ENCODE measurements at regions of chr9 and their contacts with region 1.

Region 1: DNA sequence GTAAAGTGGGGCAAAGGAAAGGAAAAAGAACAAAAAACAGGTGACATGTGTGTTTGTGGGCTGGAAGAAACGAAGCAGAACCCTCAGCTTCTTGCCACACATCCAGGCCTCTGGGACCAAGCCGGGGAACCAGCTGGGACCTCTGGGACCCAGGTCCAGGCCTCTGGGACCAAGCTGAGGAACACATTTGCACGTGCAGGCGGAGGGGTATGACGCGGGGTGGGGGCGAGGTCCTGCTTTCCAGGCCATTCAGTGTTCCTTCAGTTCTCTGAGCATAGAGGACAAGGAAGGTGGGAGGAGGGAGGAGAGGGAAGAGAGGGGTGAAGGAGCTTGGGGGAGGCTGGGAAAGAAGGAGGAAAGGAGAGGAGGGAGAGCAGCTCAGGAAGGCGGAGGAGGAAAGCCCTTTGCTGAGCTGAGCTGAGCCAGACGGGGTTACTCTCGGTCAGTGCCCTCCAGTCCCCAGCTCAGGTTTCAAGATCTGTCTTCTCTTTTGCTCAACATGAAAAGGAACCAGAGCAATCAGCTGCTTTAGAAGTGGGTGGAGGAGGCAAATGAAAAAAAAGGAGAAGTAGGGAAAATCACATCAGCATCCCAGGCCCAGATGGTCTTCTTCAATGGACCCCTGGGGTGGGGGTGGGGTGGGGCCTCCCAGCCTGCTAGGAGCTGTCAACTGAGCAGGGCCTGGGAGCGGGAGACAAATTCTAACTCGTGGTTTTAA is 59.1 kb downstream of the ABCA1 start:
- H3K4me3 Mint-ChIP-seq: peak overlapping the region; percentile 39
- H3K27ac Mint-ChIP-seq: peak overlapping the region; percentile 96
- H3K4me1 Mint-ChIP-seq: peaks cover 81% of the 10 kb centered on the region
- H3K27me3 Mint-ChIP-seq: no peaks in the 10 kb centered on the region

Region 2: DNA sequence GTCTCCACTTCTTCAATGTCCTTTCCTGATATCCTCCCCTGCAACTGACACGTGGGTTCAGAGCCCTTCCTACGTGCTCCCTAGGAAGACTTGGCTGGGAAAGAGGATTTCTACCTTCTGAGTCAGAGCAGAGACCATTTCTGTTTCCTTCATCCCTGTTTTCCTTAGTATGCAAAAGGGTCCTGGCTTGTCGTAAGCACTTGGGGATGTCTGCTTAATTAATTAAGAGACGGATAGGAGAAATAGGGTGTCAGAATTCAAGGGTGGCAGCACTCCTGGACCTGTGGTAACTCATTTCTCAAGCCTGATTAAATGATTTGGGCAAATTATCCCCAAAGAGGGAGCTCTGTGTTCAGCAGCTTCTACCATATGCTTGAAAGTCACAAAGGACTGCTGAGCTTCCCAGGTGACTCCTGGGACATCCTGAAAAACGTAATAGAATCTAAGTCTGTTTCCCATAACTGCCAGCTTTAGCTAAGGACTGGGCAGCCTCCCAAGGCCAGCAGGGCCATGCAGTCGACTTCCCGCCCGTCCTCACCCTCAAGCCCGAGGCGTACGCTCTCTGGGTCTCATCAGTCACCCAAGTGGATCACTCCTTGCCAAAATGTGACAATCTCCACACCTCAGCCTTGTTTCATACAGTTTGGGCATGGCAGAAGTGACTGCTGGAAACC is 38.6 kb after region 1 on chr9:
- intact Hi-C with region 1: loop called (anchors 5 kb)
- H3K4me3 Mint-ChIP-seq: no peak overlapping the region
- H3K27ac Mint-ChIP-seq: no peak overlapping the region
- H3K4me1 Mint-ChIP-seq: peaks cover 66% of the 10 kb centered on the region
- H3K27me3 Mint-ChIP-seq: no peaks in the 10 kb centered on the region

Region 3: DNA sequence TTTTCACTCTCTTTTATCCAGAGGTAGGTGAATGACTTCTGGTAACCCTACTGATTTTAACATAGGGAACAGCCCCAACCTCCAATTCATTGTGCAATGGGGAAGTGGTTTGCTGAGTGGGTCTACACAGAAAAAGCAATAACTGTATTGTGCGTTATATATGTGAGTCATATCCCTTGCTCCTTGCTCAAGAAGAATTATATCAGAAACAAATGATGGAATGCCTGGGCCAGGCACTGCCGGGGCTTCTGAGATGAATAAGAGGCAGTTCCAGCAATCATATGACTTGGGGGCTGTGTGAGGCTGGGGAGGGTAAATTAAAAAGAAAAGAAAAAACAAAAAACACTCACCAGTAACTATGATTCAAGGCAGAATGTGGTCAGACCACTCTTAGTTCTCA is 138.3 kb after region 1 on chr9:
- intact Hi-C with region 1: no loop called
- H3K4me3 Mint-ChIP-seq: peak overlapping the region; percentile 63
- H3K27ac Mint-ChIP-seq: peak overlapping the region; percentile 88
- H3K4me1 Mint-ChIP-seq: peaks cover 43% of the 10 kb centered on the region
- H3K27me3 Mint-ChIP-seq: peaks cover 12% of the 10 kb centered on the region

Measured in dendritic cell treated with granulocyte-macrophage colony-stimulating factor and Interleukin-4, amounts not matched to agents 40 ng/mL and 50 ng/mL, for 4 days (primary cell).